Activated T-helper 1 cell treated with anti-CD3 and anti-CD28 coated beads, Interleukin-12 subunit alpha, Interleukin-12 subunit beta, Interleukin-2, Interleukin-4 antibody, amounts not matched to agents 30 ng/mL and 10 ng/mL and 1 ng/mL, durations not matched to agents 14 hours and 24 hours and 36 hours (primary cell): ENCODE measurements at regions of chr9 and their contacts with region 1.

Region 1: GRCh38 chr9:133992780-133993634 is 883 bp upstream of the VAV2 start:
- DNase-seq: peak; percentile 49
- H3K4me3 Mint-ChIP-seq: peak overlapping the region; percentile 72
- H3K27ac Mint-ChIP-seq: no peak overlapping the region
- H3K4me1 Mint-ChIP-seq: no peaks in the 10 kb centered on the region
- H3K27me3 Mint-ChIP-seq: peaks cover 19% of the 10 kb centered on the region

Region 2: GRCh38 chr9:133406480-133407307 is 586.3 kb before region 1 on chr9:
- intact Hi-C with region 1: no loop called
- DNase-seq: peak; percentile 67
- H3K4me3 Mint-ChIP-seq: no peak overlapping the region
- H3K27ac Mint-ChIP-seq: peak overlapping the region; percentile 82
- H3K4me1 Mint-ChIP-seq: peaks cover 9% of the 10 kb centered on the region
- H3K27me3 Mint-ChIP-seq: no peaks in the 10 kb centered on the region

Region 3: DNA sequence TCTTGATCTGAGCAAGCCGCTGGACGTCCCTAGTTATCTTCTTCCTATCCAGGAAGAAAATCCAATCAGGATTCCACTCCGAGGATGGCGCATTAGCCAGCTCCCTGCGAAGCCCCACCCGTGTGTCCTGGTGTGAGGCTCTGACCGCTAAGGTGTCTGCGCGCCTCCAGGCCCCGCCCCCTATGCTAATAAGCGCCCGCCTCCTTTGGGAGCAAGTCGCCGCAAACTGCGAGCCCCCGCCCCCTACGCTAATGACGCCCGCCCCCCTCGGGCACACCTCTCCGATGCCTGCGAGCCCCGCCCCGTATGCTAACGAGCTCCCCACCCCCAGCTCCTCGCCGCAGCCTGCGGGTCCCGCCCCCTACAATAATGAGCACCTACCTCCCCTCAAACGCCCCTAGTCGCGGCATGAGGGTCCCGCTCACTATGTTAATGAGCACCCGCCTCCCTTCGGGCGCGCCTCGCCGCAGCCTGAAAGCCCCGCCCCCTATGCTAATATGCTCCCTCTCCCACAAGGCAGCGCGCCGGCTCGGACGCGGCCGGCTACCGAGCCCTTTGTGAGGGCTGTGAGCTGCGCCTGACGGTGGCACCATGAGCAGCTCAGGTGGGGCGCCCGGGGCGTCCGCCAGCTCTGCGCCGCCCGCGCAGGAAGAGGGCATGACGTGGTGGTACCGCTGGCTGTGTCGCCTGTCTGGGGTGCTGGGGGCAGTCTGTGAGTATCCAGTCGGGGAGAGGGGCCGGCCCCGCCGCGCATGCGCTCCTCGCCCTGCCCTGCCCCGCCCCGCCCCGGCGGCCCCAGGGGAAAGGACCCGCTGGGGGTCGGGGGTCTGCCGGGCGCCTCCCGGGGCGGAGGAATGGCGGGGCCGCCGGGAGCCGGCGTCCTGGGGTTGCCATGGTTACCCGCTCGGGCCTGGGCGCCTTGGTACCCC is 533.3 kb before region 1 on chr9 and contains the start of gene CACFD1:
- intact Hi-C with region 1: loop called (anchors 2 kb)
- DNase-seq: peak; percentile 80
- H3K4me3 Mint-ChIP-seq: peak within 1 kb of the TSS; percentile 86
- H3K27ac Mint-ChIP-seq: peak within 1 kb of the TSS; percentile 77
- H3K4me1 Mint-ChIP-seq: no peaks in the 10 kb centered on the region
- H3K27me3 Mint-ChIP-seq: peaks cover 11% of the 10 kb centered on the region
- total RNA-seq, gene CACFD1: 1.0 and 1.1 TPM in 2 replicates

Region 4: DNA sequence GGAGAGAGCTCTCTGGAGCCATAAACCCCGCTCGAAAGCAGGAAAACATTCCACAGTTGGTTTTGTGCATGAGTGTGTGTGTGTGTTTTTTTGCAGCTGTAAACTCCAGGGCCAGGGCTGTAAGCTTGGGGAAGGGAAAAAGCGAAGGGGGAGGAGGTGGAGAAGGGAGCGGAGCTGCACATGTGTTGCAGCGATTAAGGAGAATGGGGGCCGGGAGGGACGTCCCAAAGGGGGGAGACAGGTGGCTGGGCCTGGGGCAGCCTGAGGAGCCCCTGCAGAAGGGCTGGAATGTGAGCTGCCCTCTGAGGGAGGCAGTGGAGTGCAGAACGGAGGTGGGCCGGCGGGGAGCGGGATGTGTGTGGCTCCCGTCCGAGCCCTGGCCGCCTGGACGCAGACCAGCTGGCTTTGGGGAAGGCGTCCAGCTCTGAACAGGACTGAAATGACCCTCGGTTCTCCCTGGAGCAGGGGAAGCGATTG is 465.5 kb before region 1 on chr9:
- intact Hi-C with region 1: no loop called
- DNase-seq: no peak
- H3K4me3 Mint-ChIP-seq: no peak overlapping the region
- H3K27ac Mint-ChIP-seq: no peak overlapping the region
- H3K4me1 Mint-ChIP-seq: no peaks in the 10 kb centered on the region
- H3K27me3 Mint-ChIP-seq: peaks cover 2% of the 10 kb centered on the region

Region 5: DNA sequence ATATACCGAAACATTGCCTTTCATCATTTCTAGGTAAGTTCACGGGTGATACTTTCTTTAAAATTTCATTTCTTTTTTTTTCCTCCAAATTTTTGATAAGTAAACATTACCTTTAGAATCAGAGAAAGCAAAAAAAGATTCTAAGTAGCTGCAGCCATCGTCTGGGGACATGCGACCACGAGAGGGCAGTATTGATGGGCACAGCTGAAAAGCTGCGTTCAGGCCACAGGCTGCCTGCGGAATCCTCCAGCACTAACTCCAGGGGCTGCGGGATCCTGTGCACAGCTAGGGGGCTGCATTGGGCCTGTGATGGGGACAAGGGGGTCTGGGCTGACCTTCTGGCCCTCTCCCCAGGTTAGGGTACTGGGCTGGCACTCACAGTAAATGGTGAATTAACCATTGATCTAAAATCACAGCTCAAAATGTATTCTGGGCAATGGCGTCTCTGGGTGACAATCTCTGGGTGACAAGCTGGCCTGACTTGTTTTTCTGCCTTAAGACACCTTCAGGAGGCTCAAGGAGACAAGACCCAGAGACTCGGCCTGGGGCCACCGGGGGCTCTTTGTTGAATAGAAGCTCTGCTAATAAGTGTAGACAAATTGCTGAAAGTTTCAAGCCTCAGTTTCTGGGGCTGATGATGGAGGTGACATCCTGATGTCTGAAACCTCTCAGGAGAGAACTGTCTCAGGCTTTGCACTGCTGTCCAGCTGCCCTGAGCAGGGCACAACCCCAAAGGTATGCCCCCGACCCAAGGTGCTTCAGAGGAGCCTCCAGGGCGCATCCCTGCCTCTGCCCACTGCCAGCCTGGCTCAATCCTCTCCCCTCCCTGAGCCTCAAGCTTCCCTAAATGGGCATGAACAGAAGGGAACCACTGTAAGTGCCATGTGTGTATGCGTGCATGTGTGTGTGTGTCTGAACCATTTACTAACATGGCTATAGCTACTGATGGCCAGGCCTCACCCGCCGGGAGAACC is 210.6 kb before region 1 on chr9:
- intact Hi-C with region 1: loop called (anchors 1 kb)
- DNase-seq: peak; percentile 34
- H3K4me3 Mint-ChIP-seq: no peak overlapping the region
- H3K27ac Mint-ChIP-seq: no peak overlapping the region
- H3K4me1 Mint-ChIP-seq: no peaks in the 10 kb centered on the region
- H3K27me3 Mint-ChIP-seq: no peaks in the 10 kb centered on the region

Region 6: GRCh38 chr9:133792721-133793470 is 200.1 kb before region 1 on chr9:
- intact Hi-C with region 1: loop called (anchors 1 kb)
- DNase-seq: peak; percentile 29
- H3K4me3 Mint-ChIP-seq: no peak overlapping the region
- H3K27ac Mint-ChIP-seq: no peak overlapping the region
- H3K4me1 Mint-ChIP-seq: no peaks in the 10 kb centered on the region
- H3K27me3 Mint-ChIP-seq: no peaks in the 10 kb centered on the region

Region 7: DNA sequence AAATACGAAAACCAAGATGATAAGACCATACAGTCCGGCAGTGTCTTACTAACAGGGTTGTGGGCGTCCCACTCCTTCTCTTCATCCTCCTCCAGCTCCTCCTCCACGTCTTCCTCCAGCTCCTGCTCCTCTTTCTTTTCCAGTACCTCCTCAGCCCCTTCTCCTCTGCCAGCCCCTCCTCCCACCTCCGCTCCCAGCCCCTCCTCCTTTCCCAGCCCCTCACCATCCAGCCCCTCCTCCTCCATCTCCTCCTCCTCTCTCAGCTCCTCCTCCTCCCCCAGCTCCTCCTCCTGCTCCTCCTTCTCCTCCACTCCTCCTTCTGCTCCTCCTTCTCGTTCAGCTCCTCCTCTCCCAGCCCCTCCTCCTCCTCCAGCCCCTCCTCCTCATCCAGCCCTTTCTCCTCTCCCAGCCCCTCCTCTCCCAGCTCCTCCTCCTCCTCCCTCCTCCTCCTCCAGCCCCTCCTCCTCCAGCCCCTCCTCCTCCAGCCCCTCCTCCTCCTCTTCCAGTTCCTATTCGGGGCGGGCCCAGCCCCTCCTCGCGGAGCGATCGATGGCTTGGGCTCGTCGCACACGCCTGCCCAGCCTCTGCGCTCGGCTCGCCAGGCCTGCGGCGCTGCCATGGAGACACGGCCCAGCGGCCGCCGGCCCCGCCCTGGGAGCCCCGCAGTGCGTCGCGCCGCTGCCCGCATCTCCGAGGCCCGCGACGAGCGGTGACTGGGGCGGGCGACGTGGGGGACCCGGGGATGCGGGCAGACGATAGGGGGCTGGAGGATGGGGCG is 32.0 kb after region 1 on chr9 and contains the start of gene BRD3OS:
- intact Hi-C with region 1: loop called (anchors 1 kb)
- DNase-seq: peak; percentile 92
- H3K4me3 Mint-ChIP-seq: peak within 1 kb of the TSS; percentile 79
- H3K27ac Mint-ChIP-seq: no peak within 1 kb of the TSS
- H3K4me1 Mint-ChIP-seq: no peaks in the 10 kb centered on the region
- H3K27me3 Mint-ChIP-seq: no peaks in the 10 kb centered on the region
- total RNA-seq, gene BRD3OS: 12.3 and 14.5 TPM in 2 replicates

Region 8: DNA sequence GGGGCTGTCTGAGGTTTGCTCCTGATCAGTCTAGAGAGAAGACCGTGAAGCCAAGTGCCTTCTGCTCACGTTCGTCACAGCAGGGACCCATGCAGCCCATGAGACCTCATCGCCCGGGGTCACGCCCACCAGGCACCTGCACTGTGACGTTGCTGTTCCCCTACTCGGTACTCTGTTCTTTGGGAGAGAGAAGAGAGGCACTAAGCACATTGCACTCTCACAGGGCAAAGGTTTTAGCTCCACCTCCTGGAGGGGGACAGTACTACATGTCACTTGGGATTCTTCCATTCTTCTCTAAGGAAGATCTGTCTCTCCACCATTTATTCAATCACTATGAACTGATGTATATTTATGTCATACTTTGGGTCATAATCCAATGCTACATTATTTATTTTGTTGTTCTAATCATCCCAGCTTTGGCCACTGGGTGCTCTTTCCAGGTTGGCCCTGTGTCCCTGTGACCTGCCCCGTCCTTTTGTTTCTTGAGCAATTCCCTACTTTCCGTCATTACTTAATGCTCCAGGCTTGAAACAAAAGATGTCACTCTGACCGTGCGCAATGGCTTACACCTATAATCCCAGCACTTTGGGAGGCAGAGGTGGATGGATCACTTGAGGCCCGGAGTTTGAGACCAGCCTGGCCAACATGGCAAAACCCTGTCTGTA is 106.2 kb after region 1 on chr9:
- intact Hi-C with region 1: loop called (anchors 1 kb)
- DNase-seq: peak; percentile 36
- H3K4me3 Mint-ChIP-seq: no peak overlapping the region
- H3K27ac Mint-ChIP-seq: peak overlapping the region; percentile 33
- H3K4me1 Mint-ChIP-seq: no peaks in the 10 kb centered on the region
- H3K27me3 Mint-ChIP-seq: peaks cover 7% of the 10 kb centered on the region

Region 9: GRCh38 chr9:134449221-134449894 is 456.4 kb after region 1 on chr9:
- intact Hi-C with region 1: no loop called
- DNase-seq: peak; percentile 55
- H3K4me3 Mint-ChIP-seq: no peak overlapping the region
- H3K27ac Mint-ChIP-seq: no peak overlapping the region
- H3K4me1 Mint-ChIP-seq: no peaks in the 10 kb centered on the region
- H3K27me3 Mint-ChIP-seq: peaks cover 2% of the 10 kb centered on the region